Endothelial cell of umbilical vein (primary cell): ENCODE measurements at regions of chr1 and their contacts with region 1.

Region 1: DNA sequence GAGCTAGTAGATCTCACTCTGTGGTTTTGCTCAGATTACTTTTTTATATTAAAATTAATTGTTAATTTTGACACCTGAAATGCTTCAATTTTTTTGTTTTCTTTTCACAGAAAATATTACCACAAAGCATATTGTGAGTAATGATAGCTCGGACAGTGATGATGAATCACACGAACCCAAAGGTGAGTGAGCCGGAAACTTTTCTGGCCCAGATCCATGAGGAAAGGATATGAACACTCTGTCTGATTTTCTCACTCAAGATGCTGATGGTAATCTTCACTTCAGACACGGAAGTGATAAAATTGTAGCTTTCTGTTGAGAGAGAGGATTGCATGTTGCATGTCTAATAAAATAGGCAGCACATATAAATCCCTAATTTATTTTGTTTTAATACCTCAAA is 121.8 kb downstream of the PLA2G4A start:
- DNase-seq: peak; percentile 89
- H3K4me3 ChIP-seq: no peak overlapping the region
- H3K27ac ChIP-seq: peak overlapping the region; percentile 97
- H3K4me1 ChIP-seq: peaks cover 58% of the 10 kb centered on the region
- H3K27me3 ChIP-seq: no peaks in the 10 kb centered on the region
- CTCF ChIP-seq: no peak
- POLR2A ChIP-seq: no peak

Region 2: DNA sequence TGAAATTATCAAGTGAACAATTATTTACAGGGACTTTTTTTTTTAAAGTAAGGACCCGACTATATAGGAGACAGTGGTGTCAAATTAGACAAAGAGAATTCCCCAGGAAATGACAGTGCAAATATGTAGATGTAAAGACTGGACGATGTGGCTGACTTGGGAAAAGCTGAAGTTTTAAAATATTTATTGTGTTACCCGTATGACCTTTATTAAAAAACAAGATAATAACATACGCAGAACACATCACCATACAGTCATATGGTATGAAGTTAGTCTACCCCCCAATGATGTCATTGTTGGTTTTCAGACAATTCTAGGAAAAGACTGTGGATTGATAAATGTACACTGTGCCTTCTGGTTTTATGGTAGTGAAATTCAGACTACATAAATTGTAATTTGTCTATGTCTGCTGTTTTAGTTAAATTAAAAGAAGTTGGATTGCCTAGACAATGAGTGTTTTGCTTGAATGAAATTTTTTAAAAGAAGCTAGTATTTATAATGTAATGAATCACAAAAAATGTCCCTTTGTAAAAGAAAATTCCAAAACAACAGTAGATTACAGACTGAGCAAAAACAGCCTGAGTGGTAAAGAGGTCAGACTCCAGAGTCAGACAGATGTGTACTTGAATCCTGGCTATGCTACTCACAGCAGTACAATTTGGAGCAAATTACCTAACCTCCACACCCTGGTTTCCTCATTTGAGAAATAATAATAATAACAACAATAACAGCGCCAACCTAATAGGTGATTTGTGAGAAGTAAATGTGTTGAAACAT is 474.1 kb before region 1 on chr1:
- CTCF ChIA-PET with region 1: no interaction called
- POLR2A ChIA-PET with region 1: no interaction called
- dilution Hi-C with region 1: no loop called
- intact Hi-C with region 1: loop called (anchors 1 kb)
- DNase-seq: peak; percentile 95
- H3K4me3 ChIP-seq: peak overlapping the region in 1 of 3 experiments; percentile 15
- H3K27ac ChIP-seq: peak overlapping the region; percentile 95
- H3K4me1 ChIP-seq: peaks cover 24% of the 10 kb centered on the region
- H3K27me3 ChIP-seq: no peaks in the 10 kb centered on the region
- CTCF ChIP-seq: no peak
- POLR2A ChIP-seq: no peak

Region 3: GRCh38 chr1:186854102-186854501 is 96.4 kb before region 1 on chr1:
- CTCF ChIA-PET with region 1: no interaction called
- POLR2A ChIA-PET with region 1: no interaction called
- dilution Hi-C with region 1: no loop called
- intact Hi-C with region 1: loop called (anchors 1 kb)
- DNase-seq: peak; percentile 78
- H3K4me3 ChIP-seq: peak overlapping the region in 1 of 3 experiments; percentile 6
- H3K27ac ChIP-seq: no peak overlapping the region
- H3K4me1 ChIP-seq: peaks cover 13% of the 10 kb centered on the region
- H3K27me3 ChIP-seq: no peaks in the 10 kb centered on the region
- CTCF ChIP-seq: no peak
- POLR2A ChIP-seq: no peak

Region 4: GRCh38 chr1:186974774-186975181 is 24.2 kb after region 1 on chr1:
- CTCF ChIA-PET with region 1: interaction called, 24 read pairs
- POLR2A ChIA-PET with region 1: interaction called, 6 read pairs
- dilution Hi-C with region 1: no loop called
- intact Hi-C with region 1: loop called (anchors 1 kb)
- DNase-seq: peak; percentile 98
- H3K4me3 ChIP-seq: peak overlapping the region in 1 of 3 experiments; percentile 12
- H3K27ac ChIP-seq: peak overlapping the region; percentile 93
- H3K4me1 ChIP-seq: peaks cover 49% of the 10 kb centered on the region
- H3K27me3 ChIP-seq: no peaks in the 10 kb centered on the region
- CTCF ChIP-seq: no peak
- POLR2A ChIP-seq: peak; percentile 28